ENCODE measurements at regions of chr3 and their contacts with region 1.

Region 1: DNA sequence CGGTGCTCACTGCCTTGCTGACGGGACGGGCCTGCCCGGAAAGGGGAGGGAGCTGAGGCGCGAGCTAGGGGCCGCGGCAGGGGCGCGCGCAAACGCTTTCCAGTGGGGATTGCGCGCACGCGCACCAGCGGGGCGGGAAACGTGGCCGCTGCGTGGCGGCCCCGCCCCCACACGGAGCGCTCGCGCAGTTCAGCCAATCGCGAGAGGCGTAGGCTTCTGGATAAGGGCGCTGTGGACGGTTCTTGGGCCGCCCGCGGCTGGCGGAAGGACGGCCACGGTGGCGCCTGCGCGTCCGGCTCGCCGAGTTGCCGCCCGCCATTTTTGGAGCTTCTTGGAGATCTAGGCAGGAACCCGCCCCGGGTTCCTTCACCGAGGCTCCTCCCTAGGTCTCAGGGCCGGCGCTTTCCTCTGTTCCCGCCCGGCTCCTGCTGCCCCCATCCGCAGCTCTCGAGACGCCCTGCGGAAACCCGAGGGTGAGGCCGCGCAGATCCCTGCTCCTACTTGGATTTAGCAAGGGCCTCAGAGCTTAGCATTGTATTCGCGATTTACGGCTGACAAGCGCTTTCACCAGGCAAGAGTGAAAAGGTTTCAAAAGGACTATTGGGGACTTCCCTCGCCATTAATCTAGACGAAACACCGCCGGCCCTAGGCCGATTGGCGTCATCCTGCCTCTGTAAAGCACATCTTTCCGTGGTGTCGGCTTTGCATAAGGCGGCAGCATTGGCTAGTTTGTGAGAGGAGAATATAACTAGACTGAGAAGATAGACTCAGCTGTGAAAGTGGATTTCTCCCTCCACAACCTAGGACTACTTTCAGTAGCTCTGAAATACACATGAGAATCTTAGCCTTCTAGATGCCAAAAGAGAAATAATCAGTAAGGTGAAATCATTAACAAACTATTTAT is 496 bp upstream of the STAG1 start:
- DNase-seq: peak; percentile 96
- ATAC-seq: peak; percentile 88
- H3K4me3 ChIP-seq: peak overlapping the region; percentile 81
- H3K27ac ChIP-seq: peak overlapping the region; percentile 94
- H3K4me1 ChIP-seq: peaks cover 9% of the 10 kb centered on the region
- H3K27me3 ChIP-seq: no peaks in the 10 kb centered on the region
- CTCF ChIP-seq: no peak

Region 2: GRCh38 chr3:136390574-136390973 is 362.1 kb before region 1 on chr3:
- CTCF ChIA-PET with region 1: interaction called, 27 read pairs
- POLR2A ChIA-PET with region 1: interaction called, 5 read pairs
- intact Hi-C with region 1: loop called (anchors 1 kb)
- DNase-seq: no peak
- ATAC-seq: no peak
- H3K4me3 ChIP-seq: no peak overlapping the region
- H3K27ac ChIP-seq: no peak overlapping the region
- H3K4me1 ChIP-seq: no peaks in the 10 kb centered on the region
- H3K27me3 ChIP-seq: no peaks in the 10 kb centered on the region
- CTCF ChIP-seq: no peak

Region 3: DNA sequence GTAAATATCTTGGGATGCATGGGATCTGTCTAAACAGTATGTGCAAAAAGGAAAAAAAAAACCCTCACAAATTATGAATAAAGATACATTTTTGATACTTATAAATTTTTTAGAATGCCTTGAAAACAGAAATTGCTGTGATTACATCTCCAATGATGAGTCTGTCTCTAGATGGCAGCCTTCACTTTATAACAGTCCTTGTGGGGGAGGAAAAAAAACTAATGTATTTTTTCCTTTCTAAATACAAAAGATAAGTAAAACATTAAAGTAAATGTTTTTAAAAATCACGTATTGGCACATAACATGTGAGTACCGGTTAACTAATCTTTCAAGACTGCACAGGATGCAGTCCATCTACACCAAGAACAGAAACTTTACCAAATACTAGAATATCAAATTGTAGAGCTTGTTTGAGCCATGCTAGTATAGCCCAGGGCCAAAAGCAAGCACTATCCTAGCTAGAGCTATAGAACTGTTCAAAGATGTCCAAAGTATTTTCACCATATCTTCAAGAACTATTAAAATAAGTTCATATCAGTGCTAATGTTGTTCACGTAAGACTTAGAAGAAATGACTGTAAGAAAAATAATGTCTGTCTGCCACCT is 206.9 kb before region 1 on chr3:
- CTCF ChIA-PET with region 1: interaction called, 41 read pairs
- POLR2A ChIA-PET with region 1: interaction called, 4 read pairs
- intact Hi-C with region 1: loop called (anchors 1 kb)
- DNase-seq: peak; percentile 30
- ATAC-seq: peak; percentile 42
- H3K4me3 ChIP-seq: no peak overlapping the region
- H3K27ac ChIP-seq: no peak overlapping the region
- H3K4me1 ChIP-seq: peaks cover 8% of the 10 kb centered on the region; the same call in 1 of the 2 replicates
- H3K27me3 ChIP-seq: no peaks in the 10 kb centered on the region
- CTCF ChIP-seq: peak; percentile 50

Region 4: DNA sequence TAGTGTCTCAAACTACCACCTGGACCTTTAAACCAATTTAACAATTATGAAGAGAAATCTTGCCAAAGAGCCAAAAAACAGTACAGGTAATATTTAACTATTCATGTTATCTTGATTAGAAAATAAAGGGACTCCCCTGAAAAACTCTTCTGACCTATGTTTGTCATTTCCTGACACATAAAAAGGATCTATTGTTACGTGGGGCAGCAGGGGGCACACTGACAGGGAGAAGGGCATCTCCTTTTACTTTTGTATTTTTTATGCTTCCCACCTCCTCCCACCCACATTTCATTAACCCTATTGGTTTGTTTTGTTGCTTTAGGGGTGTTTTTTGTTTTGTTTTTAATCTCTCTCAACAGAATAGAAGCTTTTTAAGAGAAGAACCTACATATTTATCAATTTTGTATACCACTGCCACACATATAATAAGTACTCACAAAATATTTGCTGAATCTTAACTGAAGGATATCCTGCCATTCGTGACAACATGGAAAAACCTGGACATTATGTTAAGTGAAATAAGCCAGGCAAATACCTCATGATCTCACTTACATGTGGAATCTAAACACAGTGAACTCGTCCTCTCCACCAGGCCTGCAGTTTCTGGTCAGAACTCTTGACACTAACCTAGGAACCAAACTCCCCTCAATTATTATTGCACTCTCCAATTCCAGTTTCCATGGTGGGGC is 18.1 kb before region 1 on chr3:
- CTCF ChIA-PET with region 1: no interaction called
- POLR2A ChIA-PET with region 1: no interaction called
- intact Hi-C with region 1: no loop called
- DNase-seq: no peak
- ATAC-seq: no peak; the same call in 1 of the 2 replicates
- H3K4me3 ChIP-seq: no peak overlapping the region
- H3K27ac ChIP-seq: no peak overlapping the region
- H3K4me1 ChIP-seq: no peaks in the 10 kb centered on the region
- H3K27me3 ChIP-seq: no peaks in the 10 kb centered on the region
- CTCF ChIP-seq: peak; percentile 32

Region 5: GRCh38 chr3:136861890-136862616 is 109.4 kb after region 1 on chr3 and contains the start of gene NCK1:
- CTCF ChIA-PET with region 1: interaction called, 5 read pairs
- POLR2A ChIA-PET with region 1: interaction called, 3 read pairs
- intact Hi-C with region 1: loop called (anchors 2 kb)
- DNase-seq: peak; percentile 93
- ATAC-seq: peak; percentile 98
- H3K4me3 ChIP-seq: peak within 1 kb of the TSS; percentile 94
- H3K27ac ChIP-seq: peak within 1 kb of the TSS; percentile 76
- H3K4me1 ChIP-seq: peaks cover 14% of the 10 kb centered on the region
- H3K27me3 ChIP-seq: no peaks in the 10 kb centered on the region
- CTCF ChIP-seq: 0 out of 2 replicates have a peak, but pooled peaks have one; percentile 12
- total RNA-seq, gene NCK1: 15.3 and 16.5 TPM in 2 replicates

Region 6: GRCh38 chr3:137013955-137014688 is 261.4 kb after region 1 on chr3:
- CTCF ChIA-PET with region 1: interaction called, 22 read pairs
- POLR2A ChIA-PET with region 1: interaction called, 4 read pairs
- intact Hi-C with region 1: loop called (anchors 1 kb)
- DNase-seq: peak; percentile 89
- ATAC-seq: peak; percentile 92
- H3K4me3 ChIP-seq: peak overlapping the region; percentile 72
- H3K27ac ChIP-seq: no peak overlapping the region
- H3K4me1 ChIP-seq: peaks cover 5% of the 10 kb centered on the region; the same call in 1 of the 2 replicates
- H3K27me3 ChIP-seq: no peaks in the 10 kb centered on the region
- CTCF ChIP-seq: peak; percentile 77

Measured in PC-3 (cell line).